ENCODE measurements at regions of chr10 and their contacts with region 1.

Region 1: GRCh38 chr10:52779541-52780390 is 7.2 kb upstream of the MBL2 start:
- DNase-seq: peak; percentile 58
- H3K4me3 Mint-ChIP-seq: no peak overlapping the region
- H3K27ac Mint-ChIP-seq: no peak overlapping the region
- H3K4me1 Mint-ChIP-seq: no peaks in the 10 kb centered on the region
- H3K27me3 Mint-ChIP-seq: no peaks in the 10 kb centered on the region

Region 2: DNA sequence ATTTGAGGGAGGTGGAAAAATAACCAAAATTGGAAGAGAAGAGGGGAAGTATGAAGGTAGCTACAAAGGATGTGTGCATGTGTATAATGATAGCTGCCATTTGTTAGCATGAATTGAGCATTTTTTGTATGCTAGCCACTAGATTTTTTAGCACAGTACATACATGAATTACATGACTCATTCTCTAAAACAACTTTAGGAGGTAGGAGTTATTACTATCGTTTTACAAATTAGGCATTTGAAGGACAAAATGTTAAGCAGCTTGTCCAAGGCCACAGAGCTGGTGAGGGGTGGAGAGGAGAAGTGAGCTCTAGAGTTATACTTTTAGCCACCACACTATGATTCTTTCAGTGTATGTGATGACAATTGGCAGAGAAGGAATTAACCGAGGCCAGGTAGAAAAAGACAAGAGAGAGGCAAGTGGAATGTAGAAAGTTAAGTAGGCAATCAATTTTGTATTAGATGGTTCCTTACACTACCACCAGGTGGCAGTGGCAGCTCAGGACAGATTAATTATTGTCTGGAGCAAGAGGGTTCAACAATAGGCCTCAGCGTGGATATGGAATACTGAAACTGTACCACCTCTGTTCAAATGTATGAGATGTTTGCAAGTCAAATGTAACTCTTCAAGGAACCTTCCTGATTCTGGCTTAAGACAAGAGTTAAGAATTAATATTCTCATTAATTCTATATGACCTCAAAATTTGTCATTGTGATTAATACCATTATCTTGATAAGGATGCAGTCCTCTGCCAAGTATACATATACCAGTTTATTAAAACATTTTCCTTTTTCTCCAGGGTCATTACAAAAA is 135.2 kb before region 1 on chr10:
- CTCF ChIA-PET with region 1: interaction called, 22 read pairs
- DNase-seq: peak; percentile 19
- H3K4me3 Mint-ChIP-seq: no peak overlapping the region
- H3K27ac Mint-ChIP-seq: no peak overlapping the region
- H3K4me1 Mint-ChIP-seq: no peaks in the 10 kb centered on the region
- H3K27me3 Mint-ChIP-seq: no peaks in the 10 kb centered on the region

Region 3: DNA sequence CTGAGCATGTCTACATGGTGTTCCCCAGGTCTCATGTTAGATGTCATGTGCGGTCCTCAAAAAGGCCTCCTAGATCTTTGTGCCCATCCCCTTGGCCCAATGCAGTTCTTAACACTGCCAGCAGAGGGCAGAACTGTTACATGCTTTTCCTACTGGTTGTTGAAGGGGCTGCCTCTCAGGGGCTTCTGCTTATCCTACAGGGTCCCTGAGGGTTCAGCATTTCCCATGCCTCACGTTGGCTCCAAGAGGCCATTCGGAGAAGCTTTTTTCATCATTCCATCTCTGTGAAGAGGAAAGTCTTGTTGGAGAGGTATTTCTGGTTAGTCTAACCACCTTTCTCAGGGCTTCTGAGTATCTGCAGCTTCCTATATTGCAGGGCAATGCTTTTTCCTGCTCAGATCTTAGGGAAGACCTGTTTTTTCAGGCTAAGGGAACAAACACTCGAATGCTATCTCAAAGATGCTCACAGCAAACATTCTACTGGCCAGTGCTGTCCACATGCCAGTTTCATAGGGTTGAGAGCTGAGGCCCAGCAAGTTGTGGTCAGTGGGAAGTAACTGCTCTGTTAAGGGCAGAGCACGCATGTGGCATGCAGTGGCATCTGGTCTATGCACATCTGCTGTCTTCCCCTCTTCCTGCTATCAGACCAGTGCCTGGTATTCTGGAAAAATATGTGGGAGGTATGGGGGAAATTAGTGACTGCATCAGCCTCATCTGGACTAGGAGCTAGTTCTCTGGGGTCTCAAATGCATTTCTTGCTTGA is 38.7 kb before region 1 on chr10:
- CTCF ChIA-PET with region 1: interaction called, 15 read pairs
- DNase-seq: peak; percentile 36
- H3K4me3 Mint-ChIP-seq: no peak overlapping the region
- H3K27ac Mint-ChIP-seq: no peak overlapping the region
- H3K4me1 Mint-ChIP-seq: no peaks in the 10 kb centered on the region
- H3K27me3 Mint-ChIP-seq: no peaks in the 10 kb centered on the region

Measured in activated naive CD4-positive, alpha-beta T cell treated with anti-CD3 and anti-CD28 coated beads, Interleukin-2, amount 10 ng/mL, durations not matched to agents 7 days and 5 days (primary cell).